HepG2 (cell line): ENCODE measurements at regions of chr17 and their contacts with region 1.

Region 1: GRCh38 chr17:48997083-48997826 is at the start of gene IGF2BP1:
- DNase-seq: peak; percentile 81
- ATAC-seq: peak; percentile 39
- H3K4me3 ChIP-seq: peak within 1 kb of the TSS; percentile 87 to 97 (median 90)
- H3K27ac ChIP-seq: peak within 1 kb of the TSS; percentile 95
- H3K4me1 ChIP-seq: peaks cover 24% of the 10 kb centered on the region
- H3K27me3 ChIP-seq: peaks cover 0 to 3% of the 10 kb centered on the region in 2 experiments; a peak in 1 of 5 replicates
- CTCF ChIP-seq: 0 out of 2 replicates have a peak, but pooled peaks have one; percentile 2
- EP300 ChIP-seq: peak in 1 of 2 experiments; percentile 5; a peak in 1 of 4 replicates
- POLR2A ChIP-seq: peak; percentile 57 to 70
- RAD21 ChIP-seq: peak; percentile 26
- total RNA-seq, gene IGF2BP1: 75.1 and 116 TPM in 2 replicates

Region 2: GRCh38 chr17:48773245-48773644 is 224.0 kb before region 1 on chr17:
- CTCF ChIA-PET with region 1: no interaction called
- POLR2A ChIA-PET with region 1: no interaction called
- in situ Hi-C with region 1: no loop called
- intact Hi-C with region 1: no loop called
- DNase-seq: no peak
- ATAC-seq: no peak
- H3K4me3 ChIP-seq: no peak overlapping the region
- H3K27ac ChIP-seq: no peak overlapping the region
- H3K4me1 ChIP-seq: no peaks in the 10 kb centered on the region
- H3K27me3 ChIP-seq: 0 out of 5 replicates have a peak, but pooled peaks cover 0 to 4% of the 10 kb centered on the region in 2 experiments
- CTCF ChIP-seq: no peak
- EP300 ChIP-seq: no peak
- POLR2A ChIP-seq: no peak
- RAD21 ChIP-seq: no peak

Region 3: DNA sequence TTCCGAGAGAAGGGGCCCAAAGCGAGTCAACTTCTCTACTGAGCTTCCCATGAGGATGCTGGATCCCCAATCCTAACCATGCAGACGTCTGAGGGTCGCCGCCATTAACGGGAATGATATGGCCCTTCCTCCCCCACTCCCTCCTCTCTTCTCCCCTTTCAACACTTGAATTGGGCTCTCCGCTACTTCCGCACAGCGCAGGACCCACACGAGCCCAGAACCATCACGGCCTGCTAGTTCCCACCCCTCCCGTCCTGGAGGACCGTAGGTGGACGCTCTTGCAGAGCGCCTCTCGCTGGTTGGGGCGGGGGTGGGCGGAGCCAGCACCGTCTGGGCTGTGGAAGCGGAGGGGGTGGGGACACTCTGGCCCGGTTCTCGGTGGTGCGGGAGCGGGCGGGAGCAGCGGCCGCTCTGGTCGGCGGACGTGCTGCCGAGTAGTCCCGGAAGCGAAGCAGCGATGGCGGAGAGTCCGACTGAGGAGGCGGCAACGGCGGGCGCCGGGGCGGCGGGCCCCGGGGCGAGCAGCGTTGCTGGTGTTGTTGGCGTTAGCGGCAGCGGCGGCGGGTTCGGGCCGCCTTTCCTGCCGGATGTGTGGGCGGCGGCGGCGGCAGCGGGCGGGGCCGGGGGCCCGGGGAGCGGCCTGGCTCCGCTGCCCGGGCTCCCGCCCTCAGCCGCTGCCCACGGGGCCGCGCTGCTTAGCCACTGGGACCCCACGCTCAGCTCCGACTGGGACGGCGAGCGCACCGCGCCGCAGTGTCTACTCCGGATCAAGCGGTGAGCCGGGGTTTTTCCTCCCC is 89.0 kb before region 1 on chr17 and contains the start of gene UBE2Z:
- CTCF ChIA-PET with region 1: no interaction called
- POLR2A ChIA-PET with region 1: interaction called, 24 read pairs
- in situ Hi-C with region 1: no loop called
- intact Hi-C with region 1: no loop called
- DNase-seq: peak; percentile 95
- ATAC-seq: peak; percentile 92
- H3K4me3 ChIP-seq: peak within 1 kb of the TSS; percentile 82 to 97 (median 94)
- H3K27ac ChIP-seq: peak within 1 kb of the TSS; percentile 91
- H3K4me1 ChIP-seq: peaks cover 69% of the 10 kb centered on the region
- H3K27me3 ChIP-seq: no peaks in the 10 kb centered on the region; a peak in 1 of 5 replicates
- CTCF ChIP-seq: peak; percentile 80
- EP300 ChIP-seq: 0 out of 4 replicates have a peak, but pooled peaks of 1 of the 2 experiments have one; percentile 43
- POLR2A ChIP-seq: peak; percentile 90 to 92
- RAD21 ChIP-seq: peak; percentile 49; the same call in 1 of the 2 replicates
- total RNA-seq, gene UBE2Z: 63.2 and 72.7 TPM in 2 replicates

Region 4: DNA sequence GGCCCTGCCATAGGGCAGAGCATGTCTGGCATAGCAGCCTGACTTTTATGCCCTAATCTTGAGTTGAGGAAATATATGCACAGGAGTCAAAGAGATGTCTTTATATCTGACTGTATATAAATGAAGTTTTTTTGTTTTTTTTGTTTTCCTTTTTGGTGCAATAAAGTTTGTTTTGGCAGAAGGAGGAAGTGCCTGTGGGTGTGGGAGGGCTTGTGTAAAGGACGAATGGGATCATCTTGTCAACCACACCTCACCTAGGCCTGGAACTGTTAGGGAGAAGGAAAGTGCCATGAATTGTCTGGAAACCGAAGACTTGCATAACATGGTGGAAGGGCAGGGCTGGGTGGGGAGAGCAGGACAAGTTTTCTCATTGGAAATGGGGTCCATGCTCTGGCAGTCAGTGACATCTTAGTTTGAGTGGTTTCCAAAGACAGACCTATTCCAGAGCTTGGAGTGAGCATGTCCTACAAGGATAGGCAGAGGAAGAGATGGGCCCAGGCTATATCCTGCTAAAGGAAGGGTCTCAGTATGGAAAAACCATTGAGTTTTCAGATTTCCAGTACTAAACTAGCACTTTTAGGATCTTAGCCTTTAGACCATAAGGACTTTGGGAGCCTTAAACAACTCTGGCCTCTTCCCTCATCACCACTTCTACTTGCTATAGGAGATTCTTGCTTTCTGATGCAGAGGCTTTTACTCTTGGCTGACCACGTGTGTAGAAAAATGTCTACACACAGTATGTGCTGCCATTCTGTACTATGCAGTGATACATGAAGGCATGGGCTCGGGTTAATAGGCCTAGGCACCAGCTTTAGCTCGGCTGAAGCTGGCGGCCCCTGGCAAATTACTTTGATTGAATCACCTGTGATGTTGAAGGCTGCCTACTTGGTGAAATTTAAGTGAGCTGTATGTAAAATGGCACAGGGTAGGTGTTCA is 68.1 kb before region 1 on chr17:
- CTCF ChIA-PET with region 1: no interaction called
- POLR2A ChIA-PET with region 1: interaction called, 15 read pairs
- in situ Hi-C with region 1: no loop called
- intact Hi-C with region 1: no loop called
- DNase-seq: no peak
- ATAC-seq: no peak; the same call in 2 of the 3 replicates
- H3K4me3 ChIP-seq: no peak overlapping the region
- H3K27ac ChIP-seq: no peak overlapping the region
- H3K4me1 ChIP-seq: peaks cover 21% of the 10 kb centered on the region
- H3K27me3 ChIP-seq: no peaks in the 10 kb centered on the region
- CTCF ChIP-seq: no peak
- EP300 ChIP-seq: no peak
- POLR2A ChIP-seq: peak; percentile 15 to 36; a peak in 2 of 4 replicates
- RAD21 ChIP-seq: no peak

Region 5: DNA sequence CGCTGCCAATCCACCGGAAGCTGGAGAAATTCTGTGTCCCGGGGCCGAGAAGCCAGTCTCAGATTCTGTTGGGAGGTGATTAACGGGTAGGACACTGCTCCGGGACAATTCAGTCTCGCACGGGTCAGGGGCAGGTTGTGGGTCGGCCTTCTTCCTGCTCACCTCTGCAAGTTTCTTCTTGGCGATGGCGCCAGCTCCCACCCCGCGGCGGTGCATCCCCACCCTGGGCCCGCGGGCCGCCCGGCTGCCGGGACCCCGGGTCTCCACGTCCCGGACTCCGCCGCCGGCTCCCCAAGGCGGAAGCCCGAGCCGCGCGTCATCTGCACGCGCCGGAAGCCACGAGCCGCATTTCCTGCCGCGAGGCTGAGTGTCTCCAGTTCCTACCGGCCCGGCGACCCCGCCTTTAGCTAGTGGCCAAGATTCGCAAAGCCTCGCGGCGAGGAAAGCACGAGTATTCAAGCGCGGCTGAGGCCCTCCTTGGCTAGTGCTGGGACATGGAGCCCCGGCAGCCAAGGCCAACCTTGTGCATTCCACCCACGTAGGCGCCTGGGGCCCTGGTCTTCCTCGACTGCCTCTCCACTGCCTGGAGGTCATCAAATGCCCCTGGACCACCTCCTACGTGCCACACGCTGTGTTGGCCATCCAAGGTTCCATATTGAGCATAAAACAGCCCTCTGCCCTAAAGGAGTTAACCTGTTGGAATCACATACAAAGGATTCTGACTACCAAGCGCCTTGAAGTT is 52.6 kb before region 1 on chr17 and contains the start of gene SNF8:
- CTCF ChIA-PET with region 1: no interaction called
- POLR2A ChIA-PET with region 1: interaction called, 77 read pairs
- in situ Hi-C with region 1: no loop called
- intact Hi-C with region 1: no loop called
- DNase-seq: peak; percentile 90
- ATAC-seq: peak; percentile 97
- H3K4me3 ChIP-seq: peak within 1 kb of the TSS; percentile 75 to 91 (median 90)
- H3K27ac ChIP-seq: peak within 1 kb of the TSS; percentile 86
- H3K4me1 ChIP-seq: peaks cover 27% of the 10 kb centered on the region
- H3K27me3 ChIP-seq: no peaks in the 10 kb centered on the region; a peak in 1 of 5 replicates
- CTCF ChIP-seq: peak; percentile 35; the same call in 1 of the 2 replicates
- EP300 ChIP-seq: no peak; a peak in 1 of 4 replicates
- POLR2A ChIP-seq: peak; percentile 91 to 92
- RAD21 ChIP-seq: peak; percentile 71; the same call in 1 of the 2 replicates
- total RNA-seq, gene SNF8: 152 and 153 TPM in 2 replicates

Region 6: DNA sequence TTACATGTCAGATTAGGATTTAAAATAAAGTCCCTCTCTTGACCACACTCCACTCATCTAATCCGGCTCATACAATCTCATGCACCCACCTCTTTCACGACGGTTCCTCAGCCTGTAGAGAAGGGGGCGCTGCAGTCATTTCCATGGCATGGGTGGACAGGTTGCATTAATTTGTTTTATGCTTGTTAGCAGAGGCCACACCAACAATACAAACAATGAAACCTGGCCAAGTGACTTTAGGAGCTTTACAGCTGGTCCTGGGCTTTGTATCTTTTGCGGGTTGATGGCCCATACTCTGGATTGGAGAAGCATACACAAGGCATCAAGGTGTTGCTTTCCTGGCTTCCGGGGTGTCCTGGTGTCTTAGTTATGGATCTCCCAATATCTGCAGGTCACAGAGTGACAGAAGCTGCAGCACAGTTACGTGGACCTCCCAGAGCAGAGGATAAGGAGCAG is 42.9 kb before region 1 on chr17:
- CTCF ChIA-PET with region 1: interaction called, 3 read pairs
- POLR2A ChIA-PET with region 1: interaction called, 135 read pairs
- in situ Hi-C with region 1: no loop called
- intact Hi-C with region 1: loop called (anchors 2 kb)
- DNase-seq: peak; percentile 79
- ATAC-seq: peak; percentile 96
- H3K4me3 ChIP-seq: peak overlapping the region in 2 of 3 experiments; percentile 1 to 61; a peak in 3 of 6 replicates
- H3K27ac ChIP-seq: no peak overlapping the region
- H3K4me1 ChIP-seq: peaks cover 38% of the 10 kb centered on the region
- H3K27me3 ChIP-seq: no peaks in the 10 kb centered on the region
- CTCF ChIP-seq: peak; percentile 96
- EP300 ChIP-seq: no peak
- POLR2A ChIP-seq: no peak
- RAD21 ChIP-seq: peak; percentile 99

Region 7: DNA sequence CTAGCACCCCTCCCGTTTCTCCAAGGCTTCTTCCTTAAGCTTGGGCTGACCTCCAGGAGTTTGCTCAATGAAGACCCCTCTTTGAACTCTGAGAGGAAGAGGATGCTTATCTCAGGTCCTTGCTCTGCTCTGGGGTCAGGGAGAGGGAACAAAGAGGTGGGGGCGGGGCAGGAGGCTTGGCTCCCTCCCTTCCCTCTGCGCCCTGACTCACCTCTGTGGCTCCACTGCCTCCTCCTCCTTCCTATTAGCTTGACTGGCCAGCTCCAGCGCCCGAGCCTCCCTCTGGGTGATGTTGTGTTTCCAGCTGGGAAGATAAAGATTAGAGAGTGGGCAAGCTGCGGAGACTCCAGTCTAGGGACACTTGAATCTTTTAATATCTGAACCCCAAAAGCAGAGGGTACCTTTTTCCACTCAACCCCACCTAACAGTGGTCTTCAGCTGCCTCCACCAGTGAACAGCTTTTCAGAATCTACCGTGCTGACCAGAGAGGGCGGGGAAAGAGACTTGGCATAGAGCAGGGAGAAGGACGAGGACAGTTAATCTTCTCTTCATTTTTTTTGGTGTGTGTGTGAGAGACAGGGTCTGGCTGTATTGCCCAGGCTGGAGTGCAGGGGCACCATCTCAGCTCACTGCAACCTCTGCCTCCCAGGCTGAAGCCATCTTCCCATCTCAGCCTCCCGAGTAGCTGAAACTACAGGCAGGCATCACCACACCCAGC is 35.6 kb before region 1 on chr17:
- CTCF ChIA-PET with region 1: no interaction called
- POLR2A ChIA-PET with region 1: interaction called, 135 read pairs
- in situ Hi-C with region 1: no loop called
- intact Hi-C with region 1: no loop called
- DNase-seq: peak; percentile 78
- ATAC-seq: peak; percentile 89
- H3K4me3 ChIP-seq: peak overlapping the region; percentile 55 to 74 (median 58)
- H3K27ac ChIP-seq: peak overlapping the region; percentile 49
- H3K4me1 ChIP-seq: peaks cover 54% of the 10 kb centered on the region
- H3K27me3 ChIP-seq: no peaks in the 10 kb centered on the region
- CTCF ChIP-seq: 0 out of 2 replicates have a peak, but pooled peaks have one; percentile 12
- EP300 ChIP-seq: peak in 1 of 2 experiments; percentile 69; a peak in 1 of 4 replicates
- POLR2A ChIP-seq: no peak; a peak in 1 of 4 replicates
- RAD21 ChIP-seq: no peak

Region 8: GRCh38 chr17:49016788-49017463 is 19.7 kb after region 1 on chr17:
- CTCF ChIA-PET with region 1: no interaction called
- POLR2A ChIA-PET with region 1: interaction called, 65 read pairs
- in situ Hi-C with region 1: no loop called
- intact Hi-C with region 1: no loop called
- DNase-seq: no peak
- ATAC-seq: no peak
- H3K4me3 ChIP-seq: no peak overlapping the region
- H3K27ac ChIP-seq: no peak overlapping the region
- H3K4me1 ChIP-seq: peaks cover 92% of the 10 kb centered on the region
- H3K27me3 ChIP-seq: no peaks in the 10 kb centered on the region
- CTCF ChIP-seq: no peak
- EP300 ChIP-seq: no peak
- POLR2A ChIP-seq: 0 out of 4 replicates have a peak, but pooled peaks of 1 of the 2 experiments have one; percentile 17
- RAD21 ChIP-seq: no peak